Gastrocnemius medialis (tissue), 4 donors: ENCODE measurements at regions of chr13 and their contacts with region 1.

Region 1: DNA sequence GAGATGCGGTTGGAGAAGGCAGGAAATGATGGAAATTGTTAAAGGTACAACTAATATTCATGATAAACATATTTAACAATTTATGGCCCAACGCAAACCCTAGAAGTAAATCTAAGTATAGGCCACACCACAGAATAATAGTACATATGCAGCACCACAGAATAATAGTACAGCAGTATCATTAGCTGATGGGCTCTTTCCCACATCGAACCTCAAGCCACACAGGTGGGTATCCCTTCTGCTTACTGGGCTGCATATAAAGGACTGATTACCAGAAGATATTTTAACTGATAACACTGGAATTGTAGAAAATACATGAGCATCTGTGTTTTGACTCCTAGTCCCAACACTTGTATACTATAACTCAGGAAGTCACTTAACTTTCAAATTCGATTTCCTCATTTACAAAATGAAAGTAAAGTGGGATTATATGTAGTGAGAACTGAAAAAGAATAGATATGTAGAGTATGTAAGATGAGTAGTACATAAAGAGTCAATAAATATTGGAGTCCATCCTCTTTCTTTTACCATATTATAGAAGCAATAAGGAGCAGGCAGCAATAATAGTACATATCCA is 91.5 kb downstream of the TSC22D1 start:
- DNase-seq: no peak
- ATAC-seq: peak in 1 of 2 donors; percentile 17
- H3K4me3 ChIP-seq: no peak overlapping the region
- H3K27ac ChIP-seq: peak overlapping the region; percentile 35 to 58 (median 52)
- H3K4me1 ChIP-seq: peaks cover 46 to 48% of the 10 kb centered on the region in 2 donors
- H3K27me3 ChIP-seq: no peaks in the 10 kb centered on the region
- CTCF ChIP-seq: no peak
- POLR2A ChIP-seq: no peak

Region 2: DNA sequence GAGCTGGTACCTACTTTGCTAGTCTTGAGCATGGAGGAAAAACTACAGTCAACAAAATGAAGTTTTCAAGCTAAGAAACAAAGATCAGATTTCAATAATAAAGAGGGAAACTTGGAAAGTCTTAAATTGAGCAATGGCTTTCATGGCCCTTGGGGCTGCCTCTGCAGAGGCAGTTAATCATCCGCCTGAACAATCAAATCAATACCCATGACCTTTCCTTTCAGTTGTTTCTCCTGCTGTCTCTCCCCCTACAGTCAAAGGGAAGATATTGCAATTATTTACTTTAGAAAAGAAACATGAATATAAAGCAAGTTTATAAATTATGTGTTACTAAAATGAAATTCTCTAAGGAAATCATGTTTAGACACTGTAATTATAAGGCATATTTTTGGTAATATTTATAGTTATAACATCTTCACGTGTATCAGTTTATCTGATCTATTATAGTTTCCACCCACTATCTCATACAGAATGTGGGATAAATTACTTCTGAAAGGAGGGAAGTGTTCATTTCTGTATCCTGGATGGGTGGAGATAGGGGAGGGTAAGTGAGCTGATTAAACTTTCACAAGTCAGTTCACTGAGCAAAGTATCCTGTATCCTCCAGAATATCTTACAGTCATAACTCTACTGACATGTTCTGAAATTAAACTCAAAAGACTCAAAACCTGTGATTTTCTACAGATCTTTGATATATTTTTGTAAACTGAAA is 163.9 kb after region 1 on chr13:
- in situ Hi-C with region 1: no loop called
- intact Hi-C with region 1: loop called (anchors 10 kb)
- DNase-seq: no peak
- ATAC-seq: no peak
- H3K4me3 ChIP-seq: no peak overlapping the region
- H3K27ac ChIP-seq: no peak overlapping the region
- H3K4me1 ChIP-seq: peaks cover 3 to 10% of the 10 kb centered on the region in 2 donors
- H3K27me3 ChIP-seq: no peaks in the 10 kb centered on the region
- CTCF ChIP-seq: peak in 1 of 5 experiments; percentile 33
- POLR2A ChIP-seq: no peak

Region 3: GRCh38 chr13:44759384-44760360 is 275.0 kb after region 1 on chr13:
- in situ Hi-C with region 1: no loop called
- intact Hi-C with region 1: loop called (anchors 10 kb)
- DNase-seq: peak; percentile 68 to 86
- ATAC-seq: peak; percentile 81 to 86
- H3K4me3 ChIP-seq: peak overlapping the region in 3 of 4 donors; percentile 30 to 36 (median 33)
- H3K27ac ChIP-seq: peak overlapping the region; percentile 89 to 96 (median 96)
- H3K4me1 ChIP-seq: peaks cover 32 to 47% of the 10 kb centered on the region in 2 donors
- H3K27me3 ChIP-seq: no peaks in the 10 kb centered on the region
- CTCF ChIP-seq: no peak
- POLR2A ChIP-seq: peak in 1 of 2 donors; percentile 33

Region 4: GRCh38 chr13:44879463-44880058 is 394.9 kb after region 1 on chr13:
- in situ Hi-C with region 1: loop called in 1 of 4 experiments (anchors 10 kb)
- intact Hi-C with region 1: loop called (anchors 2 kb)
- DNase-seq: no peak
- ATAC-seq: peak; percentile 57 to 59
- H3K4me3 ChIP-seq: no peak overlapping the region
- H3K27ac ChIP-seq: peak overlapping the region; percentile 14 to 73 (median 52)
- H3K4me1 ChIP-seq: peaks cover 7 to 19% of the 10 kb centered on the region in 2 donors
- H3K27me3 ChIP-seq: no peaks in the 10 kb centered on the region
- CTCF ChIP-seq: peak; percentile 22 to 65 (median 46)
- POLR2A ChIP-seq: no peak

Region 5: GRCh38 chr13:44969551-44970484 is 485.2 kb after region 1 on chr13:
- in situ Hi-C with region 1: loop called (anchors 5 to 25 kb)
- intact Hi-C with region 1: loop called (anchors 1 kb)
- DNase-seq: no peak
- ATAC-seq: peak; percentile 64 to 69
- H3K4me3 ChIP-seq: no peak overlapping the region
- H3K27ac ChIP-seq: peak overlapping the region; percentile 60 to 81 (median 79)
- H3K4me1 ChIP-seq: peaks cover 37 to 51% of the 10 kb centered on the region in 2 donors
- H3K27me3 ChIP-seq: no peaks in the 10 kb centered on the region
- CTCF ChIP-seq: peak; percentile 78 to 92 (median 82)
- POLR2A ChIP-seq: no peak